ENCODE measurements at regions of chr11 and their contacts with region 1.

Region 1: DNA sequence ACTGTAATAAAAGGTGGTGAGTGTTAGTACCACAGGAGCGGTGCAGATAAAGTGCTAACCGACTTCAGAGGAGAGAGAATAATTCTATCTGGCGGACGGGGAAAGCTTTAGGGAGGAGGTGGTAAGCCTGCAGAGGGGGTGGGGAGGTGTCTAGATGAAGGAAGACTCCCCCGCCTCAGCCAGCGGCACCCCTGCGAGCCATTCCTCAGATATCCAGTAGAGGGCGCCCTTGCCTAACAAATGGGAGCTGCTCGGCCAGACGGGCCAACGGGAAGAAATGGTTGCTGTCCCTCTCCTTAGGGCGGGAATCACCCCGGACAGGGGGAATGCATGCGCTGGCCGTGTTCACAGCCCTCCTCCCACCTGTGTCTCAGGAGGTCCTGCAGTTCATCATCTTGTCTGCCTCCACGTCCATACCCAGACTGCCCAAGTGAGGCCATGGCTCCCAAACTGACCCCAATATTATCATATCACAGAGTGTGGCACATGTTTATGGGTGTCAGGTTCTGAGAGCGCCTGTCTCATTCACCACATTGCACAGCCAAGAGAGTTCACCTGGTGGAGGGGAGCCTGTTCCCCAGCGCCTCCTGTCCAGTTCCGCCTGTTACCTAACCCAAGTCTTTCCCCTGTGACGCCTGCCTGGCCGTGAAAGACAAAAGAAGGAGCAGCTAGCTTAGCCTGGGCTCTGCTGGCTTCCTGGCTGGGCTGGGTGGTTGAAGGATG is 85.5 kb downstream of the ST3GAL4 start:
- DNase-seq: peak; percentile 93
- H3K4me3 ChIP-seq: no peak overlapping the region
- H3K27ac ChIP-seq: no peak overlapping the region
- H3K4me1 ChIP-seq: no peaks in the 10 kb centered on the region
- H3K27me3 ChIP-seq: no peaks in the 10 kb centered on the region
- CTCF ChIP-seq: peak; percentile 98

Region 2: DNA sequence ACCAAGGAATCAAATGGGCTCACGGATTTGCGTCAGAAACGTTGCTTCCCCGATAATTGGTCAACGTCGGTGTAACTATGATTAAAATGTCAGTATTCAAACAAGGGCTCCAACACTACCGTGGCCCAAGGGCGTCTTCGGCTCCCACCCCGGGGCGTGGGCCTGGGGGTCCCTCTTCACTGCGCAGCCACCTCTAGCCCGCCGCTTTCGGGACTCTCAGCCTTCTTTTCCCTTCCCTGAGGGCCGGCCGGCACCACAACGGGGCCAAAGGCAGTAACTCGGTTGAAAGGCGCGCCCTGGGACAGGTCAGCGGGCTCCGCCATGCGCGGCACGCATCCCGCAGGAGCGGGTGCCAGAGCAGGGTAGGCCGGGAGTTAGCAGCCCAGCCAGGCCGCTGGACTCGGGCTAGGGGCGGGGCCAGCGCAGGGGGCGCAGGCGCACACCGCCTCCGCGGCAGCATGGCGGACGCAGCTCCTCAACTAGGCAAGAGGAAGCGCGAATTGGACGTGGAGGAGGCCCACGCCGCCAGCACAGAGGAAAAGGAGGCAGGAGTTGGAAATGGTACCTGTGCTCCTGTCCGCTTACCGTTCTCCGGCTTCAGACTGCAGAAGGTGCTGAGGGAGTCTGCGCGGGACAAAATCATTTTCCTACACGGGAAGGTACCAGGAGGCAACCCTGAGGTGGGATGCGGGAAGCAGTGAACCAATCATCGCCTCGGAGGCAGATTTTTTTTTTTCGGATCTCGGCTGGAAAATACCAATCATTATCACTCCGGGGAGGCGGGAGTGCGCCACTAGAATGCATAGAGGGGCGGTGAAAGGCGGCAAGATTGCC is 137.1 kb before region 1 on chr11 and contains the start of gene DCPS:
- CTCF ChIA-PET with region 1: no interaction called
- POLR2A ChIA-PET with region 1: no interaction called
- intact Hi-C with region 1: loop called (anchors 1 kb)
- DNase-seq: peak; percentile 94
- H3K4me3 ChIP-seq: peak within 1 kb of the TSS; percentile 75
- H3K27ac ChIP-seq: peak within 1 kb of the TSS; percentile 95
- H3K4me1 ChIP-seq: peaks cover 4% of the 10 kb centered on the region
- H3K27me3 ChIP-seq: no peaks in the 10 kb centered on the region
- CTCF ChIP-seq: no peak
- total RNA-seq, gene DCPS: 31.2 and 38.4 TPM in 2 replicates

Region 3: GRCh38 chr11:126573325-126574076 is 132.5 kb after region 1 on chr11:
- CTCF ChIA-PET with region 1: interaction called, 3 read pairs
- POLR2A ChIA-PET with region 1: no interaction called
- intact Hi-C with region 1: loop called (anchors 5 kb)
- DNase-seq: peak; percentile 30
- H3K4me3 ChIP-seq: no peak overlapping the region
- H3K27ac ChIP-seq: no peak overlapping the region
- H3K4me1 ChIP-seq: no peaks in the 10 kb centered on the region
- H3K27me3 ChIP-seq: peaks cover 16% of the 10 kb centered on the region
- CTCF ChIP-seq: peak; percentile 60

Region 4: GRCh38 chr11:126698576-126698975 is 257.6 kb after region 1 on chr11:
- CTCF ChIA-PET with region 1: no interaction called
- POLR2A ChIA-PET with region 1: no interaction called
- intact Hi-C with region 1: loop called (anchors 10 kb)
- DNase-seq: no peak
- H3K4me3 ChIP-seq: no peak overlapping the region
- H3K27ac ChIP-seq: no peak overlapping the region
- H3K4me1 ChIP-seq: no peaks in the 10 kb centered on the region
- H3K27me3 ChIP-seq: no peaks in the 10 kb centered on the region
- CTCF ChIP-seq: no peak

Region 5: GRCh38 chr11:127345819-127346459 is 905.0 kb after region 1 on chr11:
- CTCF ChIA-PET with region 1: interaction called, 8 read pairs
- POLR2A ChIA-PET with region 1: interaction called, 3 read pairs
- intact Hi-C with region 1: loop called (anchors 2 kb)
- DNase-seq: peak; percentile 56
- H3K4me3 ChIP-seq: no peak overlapping the region
- H3K27ac ChIP-seq: no peak overlapping the region
- H3K4me1 ChIP-seq: no peaks in the 10 kb centered on the region
- H3K27me3 ChIP-seq: peaks cover 6% of the 10 kb centered on the region
- CTCF ChIP-seq: peak; percentile 91

Measured in A673 (cell line).